ENCODE measurements at regions of chr7 and their contacts with region 1.

Region 1: GRCh38 chr7:65251851-65252620 is 121.6 kb upstream of the ZNF92 start:
- DNase-seq: no peak
- ATAC-seq: peak; percentile 97
- H3K4me3 ChIP-seq: peak overlapping the region; percentile 58 to 63
- H3K27ac ChIP-seq: peak overlapping the region; percentile 68
- H3K4me1 ChIP-seq: no peaks in the 10 kb centered on the region
- H3K27me3 ChIP-seq: no peaks in the 10 kb centered on the region
- CTCF ChIP-seq: no peak

Region 2: DNA sequence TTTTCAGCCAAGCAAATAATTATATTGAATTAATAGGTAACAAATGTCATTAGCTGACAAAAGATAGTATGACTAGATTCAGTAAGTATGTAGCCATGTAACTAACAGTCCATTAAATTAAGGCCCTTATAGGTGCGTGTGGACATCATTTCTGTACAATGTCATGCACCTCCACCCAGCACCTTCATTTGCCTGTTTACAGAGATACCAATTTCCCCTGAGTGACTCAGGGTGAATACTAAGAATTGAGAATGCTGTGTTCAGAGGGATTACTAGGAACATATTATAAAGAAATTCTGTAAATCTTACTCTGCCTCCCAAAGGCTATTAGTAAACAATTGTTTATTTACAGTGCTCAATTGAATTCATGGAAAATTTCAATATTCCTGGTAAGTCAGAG is 397.1 kb before region 1 on chr7:
- CTCF ChIA-PET with region 1: no interaction called
- POLR2A ChIA-PET with region 1: no interaction called
- in situ Hi-C with region 1: no loop called
- intact Hi-C with region 1: no loop called
- DNase-seq: no peak
- ATAC-seq: no peak
- H3K4me3 ChIP-seq: no peak overlapping the region
- H3K27ac ChIP-seq: no peak overlapping the region
- H3K4me1 ChIP-seq: no peaks in the 10 kb centered on the region; the same call in 1 of the 2 replicates
- H3K27me3 ChIP-seq: no peaks in the 10 kb centered on the region
- CTCF ChIP-seq: no peak

Region 3: DNA sequence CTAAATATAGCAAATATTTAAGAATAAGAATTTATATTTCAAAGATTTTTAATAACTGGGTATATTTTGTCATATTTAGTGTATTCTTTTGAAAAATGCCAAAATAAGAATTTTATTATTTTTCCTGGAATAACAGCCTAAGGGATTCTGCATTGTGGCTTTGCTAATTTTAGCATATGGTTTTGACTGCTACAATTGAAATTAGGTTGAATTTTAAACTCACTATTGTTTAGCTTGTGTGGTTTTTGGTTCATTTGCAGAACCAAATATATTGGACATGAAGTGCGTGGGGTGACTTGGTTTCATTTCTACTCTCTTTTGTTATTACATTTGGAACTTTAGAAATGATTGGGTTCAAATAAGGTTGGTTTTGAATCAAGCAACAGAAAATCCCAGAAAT is 313.5 kb before region 1 on chr7:
- CTCF ChIA-PET with region 1: no interaction called
- POLR2A ChIA-PET with region 1: no interaction called
- in situ Hi-C with region 1: no loop called
- intact Hi-C with region 1: no loop called
- DNase-seq: no peak
- ATAC-seq: no peak
- H3K4me3 ChIP-seq: no peak overlapping the region
- H3K27ac ChIP-seq: no peak overlapping the region
- H3K4me1 ChIP-seq: no peaks in the 10 kb centered on the region
- H3K27me3 ChIP-seq: no peaks in the 10 kb centered on the region
- CTCF ChIP-seq: no peak

Region 4: GRCh38 chr7:64951250-64951848 is 300.7 kb before region 1 on chr7:
- CTCF ChIA-PET with region 1: interaction called, 12 read pairs
- POLR2A ChIA-PET with region 1: no interaction called
- in situ Hi-C with region 1: no loop called
- intact Hi-C with region 1: no loop called
- DNase-seq: peak; percentile 30
- ATAC-seq: peak; percentile 75
- H3K4me3 ChIP-seq: no peak overlapping the region
- H3K27ac ChIP-seq: no peak overlapping the region
- H3K4me1 ChIP-seq: peaks cover 8% of the 10 kb centered on the region
- H3K27me3 ChIP-seq: peaks cover 6% of the 10 kb centered on the region
- CTCF ChIP-seq: peak; percentile 82

Region 5: DNA sequence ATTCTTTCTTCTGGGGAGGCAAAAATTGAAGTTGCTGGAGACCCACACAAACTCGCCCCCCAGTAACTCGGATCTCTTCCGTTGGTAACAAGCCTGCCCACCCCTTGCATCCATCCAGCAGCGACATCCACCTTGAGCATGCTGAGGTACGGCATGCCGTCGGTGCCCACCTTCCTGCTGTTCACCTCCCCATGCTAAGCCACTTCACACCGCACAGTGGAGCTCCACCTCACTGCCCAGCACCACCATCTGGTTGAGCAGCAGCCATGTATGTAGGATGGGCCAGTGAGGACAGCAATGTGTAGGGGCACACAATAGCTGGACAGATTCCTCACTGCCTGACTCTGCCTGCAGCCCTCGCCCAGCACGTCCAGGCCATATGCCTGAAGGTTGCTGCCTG is 16.4 kb before region 1 on chr7:
- CTCF ChIA-PET with region 1: no interaction called
- POLR2A ChIA-PET with region 1: no interaction called
- in situ Hi-C with region 1: no loop called
- intact Hi-C with region 1: loop called (anchors 1 kb)
- DNase-seq: no peak
- ATAC-seq: no peak
- H3K4me3 ChIP-seq: no peak overlapping the region
- H3K27ac ChIP-seq: no peak overlapping the region
- H3K4me1 ChIP-seq: peaks cover 5% of the 10 kb centered on the region
- H3K27me3 ChIP-seq: no peaks in the 10 kb centered on the region
- CTCF ChIP-seq: no peak

Measured in Panc1 (cell line).